Right ventricle myocardium inferior (tissue), 1 donor: ENCODE measurements at regions of chr19 and their contacts with region 1.

Region 1: GRCh38 chr19:15251749-15252397 is 19.6 kb upstream of the EPHX3 start:
- DNase-seq: peak; percentile 91
- ATAC-seq: peak; percentile 82

Region 2: DNA sequence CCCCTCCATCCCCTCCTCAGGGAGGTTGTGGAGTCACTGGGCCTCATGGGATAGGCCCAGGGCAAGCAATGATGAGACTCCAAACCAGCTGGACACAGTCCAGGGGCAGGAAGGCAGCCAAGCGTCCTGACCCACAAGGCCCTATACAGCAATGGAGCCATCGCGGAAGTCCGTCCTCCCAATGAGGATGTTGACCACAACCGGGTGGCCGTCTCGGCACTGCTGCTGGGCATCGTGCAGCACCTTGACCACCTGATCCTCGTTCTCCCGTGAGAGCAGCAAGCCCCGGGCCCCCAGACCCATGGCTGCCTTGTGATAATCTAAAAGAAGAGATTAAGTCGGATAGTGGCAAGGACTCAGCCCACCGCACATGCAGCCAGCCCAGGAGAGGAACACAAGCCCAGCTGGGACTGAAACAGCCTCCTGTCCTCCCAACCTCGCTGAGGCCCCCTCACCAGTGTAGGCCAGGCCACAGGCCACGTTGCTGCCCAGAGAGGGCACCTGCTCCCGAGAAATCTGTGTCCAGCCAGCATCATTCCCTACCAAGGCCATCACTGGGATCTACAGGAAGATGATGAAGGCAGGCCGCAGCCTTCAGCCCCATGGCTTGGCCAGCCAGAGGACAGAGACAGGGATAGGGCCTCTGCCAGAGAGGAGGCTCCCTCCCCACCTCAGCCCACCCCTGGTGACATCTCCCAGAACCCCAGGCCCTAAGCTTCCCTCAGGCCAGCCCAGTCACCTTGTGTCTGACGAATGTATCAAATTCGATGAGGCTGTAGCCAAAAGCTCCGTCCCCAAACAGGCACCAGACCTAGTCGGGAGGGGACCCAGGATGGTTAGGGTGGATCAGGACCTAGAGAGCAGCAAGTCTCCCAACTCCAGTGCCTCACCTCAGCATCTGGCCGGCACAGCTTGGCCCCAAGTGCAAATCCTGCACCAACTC is 136.5 kb before region 1 on chr19:
- intact Hi-C with region 1: loop called (anchors 10 kb)
- DNase-seq: peak; percentile 92
- ATAC-seq: peak; percentile 78

Region 3: GRCh38 chr19:15177269-15178116 is 74.4 kb before region 1 on chr19:
- intact Hi-C with region 1: loop called (anchors 5 kb)
- DNase-seq: peak; percentile 93
- ATAC-seq: peak; percentile 89

Region 4: GRCh38 chr19:15195371-15196334 is 56.2 kb before region 1 on chr19:
- intact Hi-C with region 1: loop called (anchors 5 kb)
- DNase-seq: no peak
- ATAC-seq: peak; percentile 38